Activated CD8-positive, alpha-beta memory T cell treated with anti-CD3 and anti-CD28 coated beads, Interleukin-2, amount 10 ng/mL, durations not matched to agents 7 days and 5 days (primary cell): ENCODE measurements at regions of chr11 and their contacts with region 1.

Region 1: GRCh38 chr11:76734456-76735420 is 48.4 kb upstream of the TSKU start:
- DNase-seq: no peak
- ATAC-seq: no peak
- H3K4me3 Mint-ChIP-seq: no peak overlapping the region
- H3K27ac Mint-ChIP-seq: no peak overlapping the region
- H3K4me1 Mint-ChIP-seq: peaks cover 7% of the 10 kb centered on the region
- H3K27me3 Mint-ChIP-seq: peaks cover 6% of the 10 kb centered on the region

Region 2: GRCh38 chr11:76701122-76702040 is 33.4 kb before region 1 on chr11:
- CTCF ChIA-PET with region 1: no interaction called
- DNase-seq: no peak
- ATAC-seq: no peak
- H3K4me3 Mint-ChIP-seq: no peak overlapping the region
- H3K27ac Mint-ChIP-seq: no peak overlapping the region
- H3K4me1 Mint-ChIP-seq: no peaks in the 10 kb centered on the region
- H3K27me3 Mint-ChIP-seq: peaks cover 10% of the 10 kb centered on the region

Region 3: DNA sequence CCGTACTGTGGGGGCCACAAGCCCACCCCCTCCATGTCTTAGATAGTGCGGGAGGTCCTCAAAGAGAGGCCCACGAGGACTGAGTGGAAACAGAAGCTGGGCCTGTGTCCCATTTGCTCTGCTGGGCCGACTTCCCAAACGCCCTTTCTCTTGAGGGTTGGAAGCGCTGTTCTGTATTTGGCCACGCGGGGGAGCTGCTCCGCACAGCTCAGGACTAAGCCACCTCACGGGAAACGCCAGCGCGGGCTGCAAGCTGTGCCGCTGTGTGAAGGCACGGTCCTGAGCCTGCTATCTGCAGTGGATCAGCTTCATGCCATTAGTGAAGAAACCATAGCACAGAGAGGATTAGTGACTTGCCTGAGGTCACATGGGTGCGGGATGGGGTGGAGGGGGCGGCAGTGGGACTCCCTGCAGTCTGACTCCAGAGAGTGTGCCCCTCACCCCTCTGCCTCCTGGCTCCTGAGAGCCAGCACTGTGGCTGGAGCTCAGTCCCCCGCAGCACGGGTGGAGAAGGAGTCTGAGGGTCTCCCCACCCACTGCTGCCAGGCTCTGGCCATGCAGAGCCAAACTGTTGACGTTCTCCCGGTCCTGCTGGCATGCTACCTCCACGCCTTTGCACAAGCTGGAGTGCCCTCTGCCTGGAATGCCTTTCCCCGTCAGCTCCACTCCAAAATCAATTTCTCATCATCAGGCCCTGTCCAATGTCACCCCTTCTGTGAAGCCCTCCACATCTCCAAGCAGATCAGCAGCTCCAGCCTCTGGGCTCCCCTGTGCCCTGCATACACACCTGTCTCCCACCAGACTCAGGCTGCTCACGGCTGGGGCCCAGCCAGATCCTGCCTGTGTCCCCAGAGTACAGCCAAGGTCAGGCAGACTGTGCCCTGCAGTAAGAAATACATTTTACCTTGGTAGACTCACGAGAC is 12.7 kb before region 1 on chr11:
- CTCF ChIA-PET with region 1: interaction called, 32 read pairs
- DNase-seq: peak; percentile 81
- ATAC-seq: peak; percentile 98
- H3K4me3 Mint-ChIP-seq: no peak overlapping the region
- H3K27ac Mint-ChIP-seq: no peak overlapping the region
- H3K4me1 Mint-ChIP-seq: peaks cover 7% of the 10 kb centered on the region
- H3K27me3 Mint-ChIP-seq: peaks cover 40% of the 10 kb centered on the region